Activated CD8-positive, alpha-beta memory T cell treated with anti-CD3 and anti-CD28 coated beads, Interleukin-2, amount 10 ng/mL, durations not matched to agents 7 days and 5 days (primary cell): ENCODE measurements at regions of chr17 and their contacts with region 1.

Region 1: DNA sequence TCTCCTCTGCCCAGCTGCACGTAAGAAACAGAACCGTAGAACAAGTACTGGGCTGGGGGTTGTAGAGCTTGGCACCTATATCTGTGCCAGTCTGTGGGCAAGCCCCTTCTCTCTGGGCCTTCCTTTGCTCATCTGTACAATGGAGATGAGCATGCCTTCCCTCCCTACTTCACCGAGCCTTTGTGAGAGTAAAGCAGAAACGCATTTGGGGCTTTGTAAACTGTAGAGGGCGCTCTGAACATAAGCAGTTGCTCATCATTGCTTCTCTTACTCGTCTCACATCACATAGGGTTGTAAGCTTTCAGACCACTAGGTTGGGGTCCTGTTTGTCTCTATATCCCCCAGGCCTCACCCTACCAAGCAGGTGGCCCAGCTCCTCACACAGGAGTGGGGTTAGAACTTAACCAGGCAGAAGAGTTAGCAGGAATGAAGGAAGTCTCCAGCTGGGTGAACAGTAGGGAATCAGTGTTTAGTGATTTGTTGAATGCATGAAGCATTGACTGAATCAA is 15.1 kb downstream of the SAMD14 start:
- DNase-seq: peak; percentile 68
- ATAC-seq: peak; percentile 50
- H3K4me3 Mint-ChIP-seq: no peak overlapping the region
- H3K27ac Mint-ChIP-seq: no peak overlapping the region
- H3K4me1 Mint-ChIP-seq: peaks cover 7% of the 10 kb centered on the region
- H3K27me3 Mint-ChIP-seq: peaks cover 43% of the 10 kb centered on the region

Region 2: DNA sequence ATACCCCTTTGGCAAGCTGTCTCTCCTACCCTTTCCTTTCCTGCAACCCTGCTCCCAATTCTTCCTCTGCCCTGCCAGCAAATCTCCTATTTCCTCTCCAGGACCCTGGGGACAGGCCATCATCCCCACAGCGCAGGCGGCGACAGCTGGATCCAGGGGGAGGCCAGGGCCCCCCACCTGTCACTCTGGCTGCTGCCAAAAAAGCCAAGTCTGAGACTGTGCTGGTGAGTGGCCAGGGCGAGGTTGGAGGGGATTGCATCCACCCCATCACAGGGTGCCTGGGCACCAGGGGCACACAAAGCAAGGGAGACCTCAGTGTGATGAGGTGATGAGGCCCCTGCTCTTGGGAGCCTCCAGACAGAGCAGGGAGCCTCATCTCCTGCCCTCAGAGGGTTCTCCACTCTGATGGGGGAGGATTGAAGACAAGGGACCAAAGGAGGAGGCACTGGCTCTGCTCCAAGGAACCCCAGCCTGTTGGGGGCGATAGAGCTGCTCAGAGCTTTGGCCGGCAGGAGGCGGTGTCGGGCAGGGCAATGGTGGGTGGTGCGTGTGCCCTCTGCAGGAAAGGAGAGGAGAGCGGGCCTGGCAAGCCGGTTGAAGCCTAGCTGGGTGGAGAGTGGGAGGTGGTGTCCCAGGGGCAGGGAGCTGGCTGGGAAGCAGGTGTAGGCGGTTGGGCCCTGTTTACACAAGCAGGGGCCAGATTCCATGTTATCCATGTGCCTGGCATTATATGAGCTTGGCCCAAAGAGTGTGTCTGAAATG is 35.4 kb before region 1 on chr17:
- CTCF ChIA-PET with region 1: no interaction called
- DNase-seq: no peak
- ATAC-seq: peak; percentile 23
- H3K4me3 Mint-ChIP-seq: no peak overlapping the region
- H3K27ac Mint-ChIP-seq: no peak overlapping the region
- H3K4me1 Mint-ChIP-seq: no peaks in the 10 kb centered on the region
- H3K27me3 Mint-ChIP-seq: no peaks in the 10 kb centered on the region

Region 3: GRCh38 chr17:50101346-50102163 is 13.3 kb before region 1 on chr17:
- CTCF ChIA-PET with region 1: interaction called, 19 read pairs
- DNase-seq: no peak
- ATAC-seq: no peak
- H3K4me3 Mint-ChIP-seq: no peak overlapping the region
- H3K27ac Mint-ChIP-seq: no peak overlapping the region
- H3K4me1 Mint-ChIP-seq: peaks cover 14% of the 10 kb centered on the region
- H3K27me3 Mint-ChIP-seq: no peaks in the 10 kb centered on the region

Region 4: DNA sequence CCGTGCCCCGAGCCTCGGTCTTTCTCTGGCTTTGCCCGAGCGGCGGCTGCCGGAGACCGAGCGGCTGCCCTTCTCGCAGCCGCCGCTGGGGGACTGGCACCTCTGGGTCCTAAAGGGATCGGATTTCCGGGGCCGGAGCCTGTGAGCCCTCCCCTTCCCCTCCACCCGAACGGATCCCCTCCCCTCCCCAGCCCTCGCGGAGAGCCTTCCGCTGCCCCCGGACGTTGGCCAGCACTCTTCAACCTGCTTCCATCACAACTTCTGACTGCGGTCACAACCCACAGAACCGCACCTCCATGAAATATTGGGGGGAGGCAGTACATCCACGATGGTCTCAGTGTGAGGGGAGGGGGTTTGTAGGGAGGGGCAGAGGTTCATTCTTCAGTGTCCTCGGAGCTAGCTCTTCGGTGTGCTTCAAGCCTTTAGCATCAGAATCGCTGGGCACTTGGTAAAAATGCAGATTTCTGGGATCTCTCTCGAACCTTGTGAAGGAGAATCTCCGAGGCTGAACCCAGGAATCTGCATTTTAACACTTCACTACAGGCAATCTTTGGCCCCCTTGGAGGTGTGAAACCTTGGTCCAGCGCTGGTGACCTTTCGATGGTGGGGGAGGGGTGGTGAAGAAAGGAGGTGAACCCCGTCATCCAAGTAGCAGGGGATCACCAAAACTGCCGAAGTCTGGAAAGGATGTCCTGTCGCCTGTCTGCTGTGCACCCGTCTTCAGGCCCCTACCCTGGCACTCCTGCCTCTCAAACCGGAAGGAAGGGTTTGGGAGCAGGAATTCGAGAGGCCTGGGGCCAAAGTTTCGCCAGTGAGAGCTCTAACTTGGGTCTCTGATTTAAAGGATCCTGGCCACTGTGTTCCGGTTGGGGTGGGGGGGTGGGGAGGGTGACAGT is 36.4 kb after region 1 on chr17:
- CTCF ChIA-PET with region 1: interaction called, 13 read pairs
- DNase-seq: peak; percentile 96
- ATAC-seq: peak; percentile 81
- H3K4me3 Mint-ChIP-seq: peak overlapping the region; percentile 80
- H3K27ac Mint-ChIP-seq: peak overlapping the region; percentile 96
- H3K4me1 Mint-ChIP-seq: peaks cover 43% of the 10 kb centered on the region
- H3K27me3 Mint-ChIP-seq: no peaks in the 10 kb centered on the region

Region 5: DNA sequence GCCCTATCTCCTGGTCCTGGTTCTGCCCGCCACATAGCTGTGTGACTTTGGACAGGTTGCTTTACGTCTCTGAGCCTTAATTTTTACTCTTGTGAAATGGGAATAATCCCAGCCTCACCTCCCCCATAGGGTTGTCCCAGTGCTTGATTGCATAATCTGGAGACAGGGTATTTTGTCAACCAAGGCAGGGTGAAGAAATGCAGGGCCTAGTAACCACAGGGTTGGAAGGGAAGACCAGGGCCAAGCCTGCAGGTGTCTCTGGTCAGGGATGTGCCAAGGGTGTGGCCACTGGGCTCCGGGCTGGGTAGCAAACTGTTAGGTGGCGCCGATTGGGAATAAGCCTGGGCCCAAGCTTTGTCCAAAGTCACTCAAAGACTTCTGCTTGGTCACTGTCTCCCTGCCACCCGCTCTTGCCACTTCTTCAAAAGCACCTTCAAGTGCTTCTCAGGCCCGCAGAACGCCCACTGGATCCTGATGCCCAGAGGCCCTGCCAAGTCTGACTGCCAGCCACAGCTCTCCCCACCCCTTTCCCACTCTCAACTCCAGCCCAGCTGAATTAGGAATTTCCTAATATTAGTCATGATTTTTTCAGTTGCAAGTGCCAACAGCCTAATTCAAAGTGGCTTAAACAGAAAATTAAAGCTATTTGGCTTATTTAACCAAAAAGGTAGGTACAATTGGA is 107.1 kb after region 1 on chr17:
- CTCF ChIA-PET with region 1: no interaction called
- DNase-seq: no peak
- ATAC-seq: no peak
- H3K4me3 Mint-ChIP-seq: no peak overlapping the region
- H3K27ac Mint-ChIP-seq: no peak overlapping the region
- H3K4me1 Mint-ChIP-seq: peaks cover 9% of the 10 kb centered on the region
- H3K27me3 Mint-ChIP-seq: peaks cover 35% of the 10 kb centered on the region